ENCODE measurements at regions of chr7 and their contacts with region 1.

Region 1: DNA sequence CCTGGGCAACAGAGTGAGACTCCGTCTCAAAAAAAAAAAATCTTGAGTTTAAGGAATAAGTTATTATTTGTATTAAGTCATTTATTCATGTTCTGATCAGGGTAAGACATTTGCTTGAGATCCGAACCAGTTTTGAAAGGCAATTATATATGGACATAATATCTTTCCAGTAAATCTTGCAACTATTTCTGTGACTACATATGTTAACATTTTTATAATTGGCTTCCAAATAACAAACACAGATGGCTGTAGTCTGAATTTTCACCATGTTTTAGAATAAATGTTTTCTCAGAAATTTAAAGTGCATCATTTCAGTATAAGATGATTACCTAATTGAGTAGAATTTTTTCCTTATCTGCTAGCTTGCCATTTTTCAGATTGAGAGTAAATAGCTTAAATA is 21.2 kb downstream of the AKAP9 start:
- DNase-seq: no peak
- ATAC-seq: no peak
- H3K4me3 ChIP-seq: no peak overlapping the region
- H3K27ac ChIP-seq: no peak overlapping the region
- H3K4me1 ChIP-seq: peaks cover 2% of the 10 kb centered on the region in 2 donors
- H3K27me3 ChIP-seq: no peaks in the 10 kb centered on the region

Region 2: DNA sequence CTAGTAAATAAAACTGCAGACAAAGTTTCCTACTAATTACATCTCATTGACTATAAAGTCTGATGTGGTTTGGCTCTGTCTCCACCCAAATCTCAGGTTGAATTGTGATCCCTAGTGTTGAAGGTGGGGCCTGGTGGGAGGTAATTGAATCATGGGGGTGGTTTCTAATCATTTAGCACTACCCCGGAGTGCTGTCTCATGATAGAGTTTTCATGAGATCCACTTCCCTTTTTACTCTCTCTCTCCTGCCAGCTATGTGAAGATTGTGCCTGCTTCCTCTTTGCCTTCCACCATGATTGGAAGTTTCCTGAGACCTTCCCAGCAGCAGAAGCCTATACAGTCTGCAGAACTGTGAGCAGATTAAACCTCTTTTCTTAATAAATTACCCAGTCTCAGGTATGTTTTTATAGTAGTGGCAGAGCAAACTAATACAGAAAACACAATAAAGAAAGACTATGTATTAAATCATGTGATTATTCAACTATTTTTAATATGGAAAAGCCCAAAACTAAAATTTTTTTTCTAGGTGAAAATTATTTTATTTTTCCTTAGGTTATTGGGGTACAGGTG is 465.5 kb before region 1 on chr7:
- intact Hi-C with region 1: no loop called
- DNase-seq: no peak
- ATAC-seq: no peak
- H3K4me3 ChIP-seq: no peak overlapping the region
- H3K27ac ChIP-seq: no peak overlapping the region
- H3K4me1 ChIP-seq: no peaks in the 10 kb centered on the region
- H3K27me3 ChIP-seq: no peaks in the 10 kb centered on the region

Region 3: GRCh38 chr7:92319243-92319642 is 357.4 kb after region 1 on chr7:
- intact Hi-C with region 1: loop called in 1 of 2 experiments (anchors 5 kb)
- DNase-seq: no peak
- ATAC-seq: no peak
- H3K4me3 ChIP-seq: no peak overlapping the region
- H3K27ac ChIP-seq: no peak overlapping the region
- H3K4me1 ChIP-seq: no peaks in the 10 kb centered on the region
- H3K27me3 ChIP-seq: no peaks in the 10 kb centered on the region